ENCODE measurements at regions of chr9 and their contacts with region 1.

Region 1: DNA sequence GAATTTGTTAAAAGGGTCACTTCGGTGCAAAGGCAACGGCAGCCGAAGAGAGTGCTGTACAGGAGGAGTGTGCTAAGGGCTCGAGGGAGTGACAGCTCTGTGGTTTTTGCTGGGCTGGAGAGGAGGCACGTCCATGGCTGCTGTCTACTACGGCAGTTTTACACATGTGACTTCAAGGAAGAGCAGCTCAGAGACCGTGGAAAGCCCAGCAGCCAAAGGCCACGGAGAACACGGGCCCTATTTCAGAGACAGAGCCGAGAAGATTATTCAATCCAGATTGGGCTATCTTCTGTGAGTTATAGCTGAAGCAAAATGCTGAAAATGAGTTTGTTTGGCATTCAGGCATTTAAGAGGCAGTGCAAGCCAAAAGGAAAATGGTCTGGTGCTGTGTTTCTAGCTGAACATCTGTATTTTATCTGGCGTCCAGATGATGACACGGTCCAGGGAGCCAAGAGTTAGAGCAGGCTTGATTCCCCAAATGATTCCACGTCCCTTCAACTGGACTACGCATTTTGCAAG is 96.4 kb downstream of the RFK start:
- DNase-seq: no peak
- H3K4me3 ChIP-seq: no peak overlapping the region
- H3K4me1 ChIP-seq: no peaks in the 10 kb centered on the region
- H3K27me3 ChIP-seq: no peaks in the 10 kb centered on the region

Region 2: DNA sequence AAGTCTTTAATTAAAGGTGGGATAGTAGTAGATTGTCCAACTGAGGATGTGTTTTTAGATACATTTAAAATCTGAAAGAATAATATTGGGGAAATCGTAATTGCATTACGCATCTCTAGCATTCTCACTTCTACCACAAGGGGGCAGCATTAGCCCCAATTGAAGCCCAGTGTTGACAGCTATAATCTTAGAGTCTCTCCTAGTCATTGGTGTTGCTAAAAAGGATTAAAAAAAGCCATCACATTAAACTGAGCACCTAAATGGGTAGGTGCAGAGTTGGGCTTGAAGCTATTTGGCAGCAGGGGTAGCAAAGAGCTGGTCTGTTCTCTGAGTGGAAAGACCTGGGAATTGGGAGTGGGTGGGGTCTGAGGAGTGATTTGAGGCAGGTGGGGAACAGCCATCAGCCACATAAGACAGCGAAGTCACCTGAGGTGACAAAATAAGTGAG is 1032.2 kb before region 1 on chr9:
- in situ Hi-C with region 1: loop called (anchors 25 kb)
- DNase-seq: peak; percentile 15 to 63
- H3K4me3 ChIP-seq: no peak overlapping the region
- H3K4me1 ChIP-seq: no peaks in the 10 kb centered on the region
- H3K27me3 ChIP-seq: no peaks in the 10 kb centered on the region

Region 3: DNA sequence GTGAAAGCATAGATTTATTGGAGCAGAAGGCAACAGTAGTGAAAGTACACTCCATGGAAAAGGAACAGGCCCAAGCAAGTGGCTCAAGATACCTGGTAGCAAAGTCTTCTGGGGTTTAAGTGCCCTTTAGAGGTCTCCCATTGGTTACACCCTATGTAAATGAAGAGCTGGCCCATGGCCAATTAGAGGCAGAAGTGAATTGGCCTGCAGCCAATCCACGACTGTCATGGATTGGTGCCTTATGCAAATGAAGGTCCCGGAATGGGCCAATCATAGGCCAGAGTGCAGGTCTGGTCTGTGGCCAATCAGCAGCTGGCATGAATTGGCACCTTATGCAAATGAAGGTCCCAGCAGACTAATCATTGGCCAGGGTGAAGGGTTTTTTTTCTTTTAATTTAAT is 471.5 kb before region 1 on chr9:
- in situ Hi-C with region 1: loop called (anchors 25 kb)
- DNase-seq: no peak
- H3K4me3 ChIP-seq: no peak overlapping the region
- H3K4me1 ChIP-seq: no peaks in the 10 kb centered on the region
- H3K27me3 ChIP-seq: no peaks in the 10 kb centered on the region

Measured in HAP-1 (cell line).